Activated B cell treated with CpG ODN at 0.5 μM for 24 hours (primary cell): ENCODE measurements at regions of chr3 and their contacts with region 1.

Region 1: DNA sequence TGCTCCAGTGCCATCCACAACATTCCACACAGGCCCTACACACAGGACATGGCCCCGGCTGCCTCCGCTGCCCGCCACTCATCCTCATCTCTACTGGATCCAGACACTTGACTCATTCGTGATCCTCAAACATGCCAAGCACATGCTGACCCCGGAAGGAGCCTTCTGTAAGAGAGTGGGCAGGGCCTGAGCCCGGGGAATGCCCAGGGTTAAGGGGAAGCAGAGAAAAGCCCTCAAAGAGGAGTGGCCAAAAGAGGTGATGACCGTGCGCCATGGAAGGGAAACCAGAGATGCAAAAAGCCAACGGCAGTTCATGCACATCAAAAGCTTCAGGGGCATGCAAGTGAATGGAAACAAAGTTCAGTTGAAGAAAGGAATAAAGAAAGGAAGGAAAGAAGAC is 46.1 kb downstream of the RFTN1 start:
- DNase-seq: peak; percentile 51
- ATAC-seq: peak; percentile 99
- H3K4me3 Mint-ChIP-seq: peak overlapping the region; percentile 52
- H3K27ac Mint-ChIP-seq: peak overlapping the region; percentile 55
- H3K4me1 Mint-ChIP-seq: peaks cover 69% of the 10 kb centered on the region
- H3K27me3 Mint-ChIP-seq: no peaks in the 10 kb centered on the region
- CTCF ChIP-seq: no peak

Region 2: DNA sequence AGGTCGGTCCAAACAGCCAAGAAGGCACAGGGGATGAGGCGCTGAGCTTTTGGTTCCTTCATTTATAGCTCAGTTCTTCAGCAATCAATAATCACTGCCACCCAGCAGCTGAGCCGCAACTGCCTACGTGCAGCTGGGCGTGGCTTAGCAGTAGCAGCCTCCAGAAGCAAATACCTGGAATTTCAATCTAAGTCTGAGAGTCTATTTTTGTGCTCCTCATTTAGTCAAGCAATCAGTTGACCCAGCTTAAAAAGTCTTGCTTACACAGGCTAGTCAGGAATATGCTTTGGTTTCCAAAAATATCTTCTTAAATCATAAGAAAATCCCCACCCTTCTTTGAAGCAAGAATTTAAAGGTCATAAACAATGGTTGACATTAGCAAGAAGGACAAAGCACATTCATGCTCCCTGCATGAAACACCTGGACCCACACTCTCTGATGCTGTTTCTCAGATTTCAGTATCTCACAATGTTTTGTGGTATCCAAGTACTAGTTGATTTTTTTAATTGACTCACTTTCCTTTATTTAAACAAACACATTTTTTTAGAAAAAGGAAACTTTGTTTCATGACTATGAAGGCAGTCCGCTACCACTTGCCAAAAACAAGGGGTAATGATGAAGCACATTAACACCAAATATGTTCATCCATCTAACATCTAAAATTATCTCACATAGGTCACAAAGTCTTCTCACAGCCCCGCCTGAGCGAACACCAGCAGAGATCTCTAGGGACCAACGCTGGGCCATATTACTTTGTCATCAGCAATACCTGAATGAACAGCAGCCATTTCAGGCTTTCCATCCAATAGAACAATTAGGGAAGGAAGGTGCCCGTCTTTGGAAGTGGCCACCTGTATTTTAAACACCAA is 96.3 kb before region 1 on chr3:
- CTCF ChIA-PET with region 1: no interaction called
- POLR2A ChIA-PET with region 1: no interaction called
- intact Hi-C with region 1: loop called (anchors 1 kb)
- DNase-seq: peak; percentile 32
- ATAC-seq: peak; percentile 59
- H3K4me3 Mint-ChIP-seq: peak overlapping the region; percentile 75
- H3K27ac Mint-ChIP-seq: peak overlapping the region; percentile 93
- H3K4me1 Mint-ChIP-seq: peaks cover 95% of the 10 kb centered on the region
- H3K27me3 Mint-ChIP-seq: no peaks in the 10 kb centered on the region
- CTCF ChIP-seq: no peak

Region 3: DNA sequence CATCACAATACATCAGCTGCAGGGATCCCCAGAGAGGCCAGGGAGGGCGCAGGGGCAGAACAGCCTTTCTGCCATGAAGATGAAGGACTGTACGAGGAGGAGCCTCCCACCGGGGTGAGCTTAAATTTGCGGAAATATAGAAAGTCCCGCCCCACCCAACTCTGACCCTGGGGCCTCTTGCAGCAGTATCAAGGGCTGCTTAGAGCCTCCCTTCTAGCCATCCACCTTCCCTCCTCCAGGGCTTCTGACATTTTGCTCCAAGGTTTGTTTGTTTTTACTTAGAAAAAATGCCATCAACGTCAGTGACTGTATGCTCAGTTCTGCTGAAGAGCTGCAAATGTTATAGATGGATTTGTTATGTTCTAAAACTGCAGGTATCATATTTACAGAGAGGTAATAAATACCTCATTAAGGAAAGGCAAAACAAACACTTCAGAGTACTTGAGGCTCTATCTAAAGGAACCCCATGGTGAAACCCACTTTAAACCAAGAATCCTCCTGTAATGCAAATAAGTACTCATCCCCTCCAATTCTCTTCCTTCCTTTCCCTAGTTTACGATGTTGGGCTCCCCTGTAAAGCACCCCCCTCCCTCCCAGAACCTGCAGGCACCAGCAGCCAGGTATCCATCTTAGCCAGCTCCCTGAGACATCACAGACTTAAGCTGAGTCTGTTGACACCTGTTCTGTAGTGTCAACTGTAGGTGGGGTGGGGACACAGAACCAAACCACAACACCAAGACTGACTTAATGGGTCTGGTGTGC is 15.6 kb after region 1 on chr3:
- CTCF ChIA-PET with region 1: no interaction called
- POLR2A ChIA-PET with region 1: interaction called, 3 read pairs
- intact Hi-C with region 1: loop called (anchors 2 kb)
- DNase-seq: peak; percentile 45
- ATAC-seq: peak; percentile 94
- H3K4me3 Mint-ChIP-seq: peak overlapping the region; percentile 68
- H3K27ac Mint-ChIP-seq: peak overlapping the region; percentile 78
- H3K4me1 Mint-ChIP-seq: peaks cover 86% of the 10 kb centered on the region
- H3K27me3 Mint-ChIP-seq: no peaks in the 10 kb centered on the region
- CTCF ChIP-seq: no peak

Region 4: GRCh38 chr3:16533928-16534574 is 66.7 kb after region 1 on chr3:
- CTCF ChIA-PET with region 1: no interaction called
- POLR2A ChIA-PET with region 1: no interaction called
- intact Hi-C with region 1: no loop called
- DNase-seq: no peak
- ATAC-seq: no peak
- H3K4me3 Mint-ChIP-seq: no peak overlapping the region
- H3K27ac Mint-ChIP-seq: no peak overlapping the region
- H3K4me1 Mint-ChIP-seq: peaks cover 13% of the 10 kb centered on the region
- H3K27me3 Mint-ChIP-seq: no peaks in the 10 kb centered on the region
- CTCF ChIP-seq: no peak